Posterior vena cava (tissue), 2 donors: ENCODE measurements at regions of chr11 and their contacts with region 1.

Region 1: DNA sequence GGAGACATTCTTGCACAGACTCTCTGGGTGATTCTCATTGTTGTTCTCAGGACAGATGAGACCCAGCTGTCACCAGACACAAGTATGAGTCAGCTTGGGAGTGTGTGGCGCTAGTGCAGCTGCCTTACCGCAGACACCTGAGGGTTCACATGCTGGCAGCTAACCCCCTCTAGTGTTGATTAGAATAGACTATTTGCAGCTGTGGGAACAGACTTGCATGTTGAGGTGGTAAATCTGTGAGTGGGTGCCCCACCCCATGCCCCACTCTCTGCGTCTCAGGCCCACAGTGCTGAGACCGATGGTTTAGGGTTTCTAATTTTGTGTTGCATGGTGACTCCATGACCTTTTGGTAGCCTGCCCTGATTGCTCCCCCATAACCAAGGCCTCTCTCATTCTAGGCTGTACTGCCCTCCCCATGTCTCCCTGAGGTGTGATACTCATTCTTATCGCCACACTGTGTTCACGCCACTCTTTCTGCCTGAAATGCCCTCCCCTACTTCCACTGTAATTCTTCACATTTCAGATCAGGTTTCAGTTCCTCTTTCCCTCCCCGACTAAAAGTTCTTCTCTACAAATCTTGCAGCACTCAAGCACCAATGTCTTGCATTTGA is 73.7 kb upstream of the KIRREL3 start:
- DNase-seq: no peak

Region 2: GRCh38 chr11:127098684-127099083 is 24.4 kb after region 1 on chr11:
- intact Hi-C with region 1: loop called in 1 of 2 experiments (anchors 1 kb)
- DNase-seq: no peak